ENCODE measurements at regions of chr4 and their contacts with region 1.

Region 1: GRCh38 chr4:4260253-4260652 is 12.2 kb upstream of the TMEM128 start:
- DNase-seq: no peak
- H3K4me3 Mint-ChIP-seq: no peak overlapping the region
- H3K27ac Mint-ChIP-seq: no peak overlapping the region
- H3K4me1 Mint-ChIP-seq: peaks cover 4% of the 10 kb centered on the region
- H3K27me3 Mint-ChIP-seq: no peaks in the 10 kb centered on the region

Region 2: DNA sequence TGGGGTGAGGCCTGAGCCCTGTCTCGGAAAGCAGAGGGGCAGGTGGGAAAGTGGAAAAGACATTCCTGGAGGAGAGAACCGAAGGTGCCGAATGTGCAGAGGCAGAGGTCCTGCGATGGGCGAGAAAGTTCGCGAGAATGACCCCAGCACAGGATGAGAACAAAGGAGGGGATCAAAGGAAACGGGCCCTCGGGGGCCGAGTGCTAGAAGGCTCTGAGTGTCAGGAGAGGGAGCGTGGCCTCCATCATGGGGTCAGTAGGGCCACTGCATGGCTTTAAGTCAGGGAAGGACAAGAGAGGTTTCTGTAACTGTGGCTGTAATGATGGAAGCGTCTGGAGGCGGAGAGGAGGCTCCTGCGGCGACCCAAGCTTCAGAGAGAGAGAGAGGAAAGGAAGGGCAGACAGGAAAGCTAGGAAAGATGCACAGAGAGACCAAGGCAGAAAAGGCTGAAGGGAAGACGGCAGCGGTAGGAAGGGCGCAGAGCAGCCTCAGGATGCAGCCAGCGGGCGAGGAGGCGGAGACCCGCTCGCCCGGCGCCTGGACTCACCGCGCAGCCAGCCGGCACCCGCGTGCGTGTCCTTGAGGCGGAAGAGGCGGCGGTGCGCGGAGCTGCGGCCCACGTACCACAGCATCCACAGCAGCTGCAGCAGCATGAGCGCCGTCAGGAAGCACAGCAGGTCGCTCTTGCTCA is 34.2 kb before region 1 on chr4:
- CTCF ChIA-PET with region 1: no interaction called
- POLR2A ChIA-PET with region 1: no interaction called
- DNase-seq: no peak
- H3K4me3 Mint-ChIP-seq: no peak overlapping the region
- H3K27ac Mint-ChIP-seq: no peak overlapping the region
- H3K4me1 Mint-ChIP-seq: peaks cover 3% of the 10 kb centered on the region
- H3K27me3 Mint-ChIP-seq: peaks cover 51% of the 10 kb centered on the region

Region 3: GRCh38 chr4:4289941-4290850 is 29.9 kb after region 1 on chr4 and contains the starts of genes LYAR and ZBTB49:
- CTCF ChIA-PET with region 1: interaction called, 9 read pairs
- POLR2A ChIA-PET with region 1: interaction called, 14 read pairs
- DNase-seq: peak; percentile 97
- H3K4me3 Mint-ChIP-seq: peak within 1 kb of the TSS; percentile 97
- H3K27ac Mint-ChIP-seq: peak within 1 kb of the TSS; percentile 83
- H3K4me1 Mint-ChIP-seq: peaks cover 42% of the 10 kb centered on the region
- H3K27me3 Mint-ChIP-seq: no peaks in the 10 kb centered on the region
- total RNA-seq, gene LYAR: 47.4 to 49.8 TPM
- total RNA-seq, gene ZBTB49: 6.6 to 7.4 TPM

Region 4: DNA sequence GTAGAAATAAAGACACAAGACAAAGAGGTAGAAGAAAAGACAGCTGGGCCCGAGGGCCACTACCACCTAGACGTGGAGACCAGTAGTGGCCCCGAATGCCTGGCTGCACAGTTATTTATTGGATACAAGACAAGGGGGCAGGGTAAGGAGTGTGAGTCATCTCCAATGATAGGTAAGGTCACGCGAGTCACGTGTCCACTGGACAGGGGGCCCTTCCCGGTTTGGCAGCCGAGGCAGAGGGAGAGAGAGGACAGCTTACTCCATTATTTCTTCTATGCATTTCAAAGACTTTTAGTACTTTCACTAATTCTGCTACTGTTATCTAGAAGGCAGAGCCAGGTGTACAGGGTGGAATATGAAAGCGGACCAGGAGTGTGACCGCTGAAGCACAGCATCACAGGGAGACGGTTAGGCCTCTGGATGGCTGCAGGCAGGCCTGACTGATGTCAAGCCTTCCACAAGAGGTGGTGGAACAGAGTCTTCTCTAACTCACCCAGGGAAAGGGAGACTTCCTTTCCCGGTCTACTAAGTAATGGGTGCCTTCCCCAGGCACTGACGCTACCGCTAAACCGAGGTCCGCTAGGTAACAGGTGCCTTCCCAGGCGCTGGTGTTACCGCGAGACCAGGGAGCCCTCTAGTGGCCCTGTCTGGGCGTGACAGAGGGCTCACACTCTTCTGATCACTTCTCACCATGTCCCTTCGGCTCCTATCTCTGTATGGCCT is 74.7 kb after region 1 on chr4:
- CTCF ChIA-PET with region 1: interaction called, 62 read pairs
- POLR2A ChIA-PET with region 1: interaction called, 9 read pairs
- DNase-seq: peak; percentile 85
- H3K4me3 Mint-ChIP-seq: no peak overlapping the region
- H3K27ac Mint-ChIP-seq: no peak overlapping the region
- H3K4me1 Mint-ChIP-seq: peaks cover 2% of the 10 kb centered on the region
- H3K27me3 Mint-ChIP-seq: peaks cover 3% of the 10 kb centered on the region

Region 5: GRCh38 chr4:4430492-4431197 is 170.4 kb after region 1 on chr4:
- CTCF ChIA-PET with region 1: interaction called, 23 read pairs
- POLR2A ChIA-PET with region 1: no interaction called
- DNase-seq: peak; percentile 58
- H3K4me3 Mint-ChIP-seq: no peak overlapping the region
- H3K27ac Mint-ChIP-seq: no peak overlapping the region
- H3K4me1 Mint-ChIP-seq: peaks cover 2% of the 10 kb centered on the region
- H3K27me3 Mint-ChIP-seq: no peaks in the 10 kb centered on the region

Region 6: GRCh38 chr4:4585012-4585670 is 324.9 kb after region 1 on chr4:
- CTCF ChIA-PET with region 1: no interaction called
- POLR2A ChIA-PET with region 1: no interaction called
- DNase-seq: no peak
- H3K4me3 Mint-ChIP-seq: no peak overlapping the region
- H3K27ac Mint-ChIP-seq: no peak overlapping the region
- H3K4me1 Mint-ChIP-seq: no peaks in the 10 kb centered on the region
- H3K27me3 Mint-ChIP-seq: no peaks in the 10 kb centered on the region